ENCODE measurements at regions of chr10 and their contacts with region 1.

Region 1: DNA sequence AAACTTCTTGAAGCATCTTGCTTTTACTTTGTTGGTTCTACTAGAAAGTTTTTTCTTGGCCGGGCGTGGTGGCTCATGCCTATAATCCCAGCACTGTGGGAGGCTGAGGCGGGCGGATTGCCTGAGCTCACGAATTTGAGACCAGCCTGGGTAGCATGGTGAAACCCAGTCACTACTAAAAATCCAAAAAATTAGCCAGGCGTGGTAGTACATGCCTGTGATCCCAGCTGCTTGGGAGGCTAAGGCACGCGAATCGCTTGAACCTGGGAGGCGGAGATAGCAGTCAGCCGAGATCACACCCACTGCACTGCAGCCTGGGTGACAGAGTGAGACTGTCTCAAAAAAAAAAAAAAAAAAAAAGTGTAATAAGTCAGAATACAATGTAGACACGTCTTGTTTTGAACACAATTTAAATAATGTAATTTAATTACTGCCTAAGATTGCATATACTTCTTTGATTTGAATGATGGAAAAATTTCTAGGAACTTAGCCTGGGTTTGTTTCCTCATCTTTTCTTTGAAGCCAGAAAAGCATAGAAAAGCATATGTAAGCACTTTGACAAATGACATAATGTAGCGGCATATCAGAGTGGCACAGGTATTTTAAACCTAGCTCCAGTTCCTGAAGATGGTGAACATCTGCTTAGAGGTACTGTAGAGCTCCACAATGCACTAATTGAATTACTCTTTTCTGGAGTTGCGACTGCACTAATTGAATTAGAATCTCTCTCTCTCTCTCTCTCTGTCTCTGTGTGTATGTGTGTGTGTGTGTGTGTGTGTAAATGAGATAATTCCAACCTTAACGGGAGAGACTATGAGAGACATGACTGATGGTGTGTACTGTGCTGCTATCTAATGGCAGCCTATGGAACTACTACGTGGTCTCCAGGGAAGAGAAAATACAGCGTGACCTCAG is 87.8 kb downstream of the BTRC start:
- DNase-seq: no peak
- H3K4me3 ChIP-seq: no peak overlapping the region
- H3K27ac ChIP-seq: no peak overlapping the region
- H3K4me1 ChIP-seq: peaks cover 0 to under 1% (median 0%) of the 10 kb centered on the region in 4 experiments; a peak in 1 of 7 replicates
- H3K27me3 ChIP-seq: no peaks in the 10 kb centered on the region
- CTCF ChIP-seq: peak in 2 of 3 experiments; percentile 80 to 83; a peak in 3 of 4 replicates
- EP300 ChIP-seq: no peak
- POLR2A ChIP-seq: no peak
- RAD21 ChIP-seq: peak; percentile 93 to 95

Region 2: DNA sequence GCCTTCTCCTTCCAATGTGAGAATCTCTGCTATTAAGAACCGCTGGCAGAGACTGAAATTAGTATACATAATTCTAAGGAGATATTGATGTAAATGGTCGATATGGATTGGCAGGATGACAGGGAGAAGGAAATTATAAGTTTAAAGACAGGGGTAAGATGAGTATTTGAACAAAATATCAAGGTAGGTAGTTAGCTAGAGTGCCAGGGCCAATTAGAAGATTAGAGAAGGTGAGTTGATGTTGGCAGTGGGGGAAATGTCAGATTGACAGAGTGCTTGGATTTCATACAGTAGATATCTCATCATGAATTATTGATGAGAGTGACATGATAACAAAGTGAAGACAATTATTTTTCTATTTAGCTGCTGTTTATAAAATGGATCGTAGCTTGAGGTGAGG is 13.8 kb before region 1 on chr10:
- CTCF ChIA-PET with region 1: interaction called, 16 read pairs
- POLR2A ChIA-PET with region 1: no interaction called
- DNase-seq: no peak
- H3K4me3 ChIP-seq: no peak overlapping the region
- H3K27ac ChIP-seq: no peak overlapping the region
- H3K4me1 ChIP-seq: no peaks in the 10 kb centered on the region
- H3K27me3 ChIP-seq: no peaks in the 10 kb centered on the region
- CTCF ChIP-seq: no peak
- EP300 ChIP-seq: no peak
- POLR2A ChIP-seq: no peak
- RAD21 ChIP-seq: no peak

Region 3: DNA sequence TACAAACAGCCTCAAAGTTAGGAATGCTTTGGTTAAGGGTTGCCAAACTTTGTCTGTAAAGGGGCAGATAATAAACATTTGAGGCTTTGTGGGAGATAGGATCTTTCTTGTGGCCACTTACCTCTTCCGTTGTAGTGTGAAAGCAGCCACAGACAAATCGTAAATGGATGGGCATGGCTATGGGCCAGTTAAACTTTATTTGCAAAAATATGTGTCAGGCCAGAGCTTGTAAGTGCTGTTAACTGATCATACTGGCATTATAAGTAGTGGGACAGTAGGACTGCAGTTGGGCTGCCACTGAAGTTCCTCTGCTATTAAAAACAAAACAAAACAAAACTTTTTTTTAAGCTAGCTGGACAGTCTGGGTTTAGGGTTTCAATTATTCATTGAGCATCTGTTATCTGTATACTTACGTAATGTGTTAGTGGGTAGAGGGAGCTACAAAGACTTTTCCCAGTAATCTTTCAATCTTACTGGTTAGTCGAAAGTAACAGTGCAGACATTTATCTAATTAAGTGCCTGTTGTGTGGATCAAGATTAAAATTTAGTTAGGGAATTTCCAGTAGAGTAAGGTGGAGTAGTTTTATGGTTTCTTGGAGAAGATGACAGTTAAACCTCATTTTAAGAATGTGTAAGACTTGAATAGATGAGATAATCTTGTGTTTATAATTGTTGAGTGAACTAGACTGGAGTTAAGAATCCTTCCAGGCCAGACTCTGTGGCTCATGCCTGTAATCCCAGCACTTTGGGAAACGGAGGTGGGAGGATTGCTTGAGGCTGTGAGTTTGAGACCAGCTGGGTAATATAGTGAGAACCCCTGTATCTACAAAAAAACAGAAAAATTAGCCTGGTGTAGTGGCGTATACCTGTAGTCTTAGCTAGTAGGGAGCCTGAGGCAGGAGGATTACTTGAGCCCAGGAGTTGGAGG is 12.3 kb after region 1 on chr10:
- CTCF ChIA-PET with region 1: interaction called, 37 read pairs
- POLR2A ChIA-PET with region 1: interaction called, 3 read pairs
- DNase-seq: no peak
- H3K4me3 ChIP-seq: no peak overlapping the region
- H3K27ac ChIP-seq: no peak overlapping the region
- H3K4me1 ChIP-seq: no peaks in the 10 kb centered on the region
- H3K27me3 ChIP-seq: no peaks in the 10 kb centered on the region
- CTCF ChIP-seq: no peak
- EP300 ChIP-seq: no peak
- POLR2A ChIP-seq: no peak
- RAD21 ChIP-seq: no peak